ENCODE measurements at regions of chr11 and their contacts with region 1.

Region 1: GRCh38 chr11:67401495-67402191 is at the start of gene PPP1CA:
- DNase-seq: peak; percentile 95
- H3K4me3 Mint-ChIP-seq: peak within 1 kb of the TSS; percentile 87
- H3K27ac Mint-ChIP-seq: peak within 1 kb of the TSS; percentile 93
- H3K4me1 Mint-ChIP-seq: peaks cover 64% of the 10 kb centered on the region
- H3K27me3 Mint-ChIP-seq: no peaks in the 10 kb centered on the region
- total RNA-seq, gene PPP1CA: 261 to 267 TPM

Region 2: DNA sequence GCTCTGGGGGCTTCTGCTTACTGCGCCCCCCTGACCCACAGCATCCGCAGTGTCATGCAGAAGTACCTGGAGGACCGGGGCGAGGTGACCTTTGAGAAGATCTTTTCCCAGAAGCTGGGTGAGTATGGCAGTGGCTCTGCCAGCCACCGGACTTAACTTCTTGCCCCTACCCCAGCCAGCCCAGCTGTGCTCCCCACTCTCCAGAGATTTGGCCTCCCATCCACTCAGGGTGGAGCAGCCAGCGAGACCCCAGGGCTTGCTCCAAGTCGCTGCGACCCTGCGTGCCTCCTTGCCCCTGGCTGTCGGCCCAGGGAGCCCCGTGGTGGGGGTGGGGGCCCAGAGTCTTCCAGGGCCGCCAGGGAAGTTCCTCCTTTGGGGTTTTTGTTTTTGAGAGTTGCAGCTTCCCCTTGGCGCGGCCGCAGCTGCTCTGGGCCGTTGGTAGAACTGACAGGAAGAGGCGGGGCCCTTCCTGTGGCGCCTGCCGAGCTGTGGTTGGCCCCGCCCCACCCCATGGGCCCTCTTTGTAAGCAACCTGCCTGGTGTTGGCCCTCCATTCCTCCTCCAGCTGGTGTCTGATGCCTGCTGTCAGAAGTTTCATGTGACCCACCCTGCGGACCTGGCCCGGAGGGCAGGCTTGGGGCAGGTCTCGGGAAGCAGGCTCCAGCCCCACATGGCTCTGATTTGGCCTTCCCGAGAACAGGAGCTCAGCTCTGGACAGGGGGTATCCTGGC is 124.2 kb before region 1 on chr11:
- CTCF ChIA-PET with region 1: no interaction called
- POLR2A ChIA-PET with region 1: no interaction called
- intact Hi-C with region 1: loop called (anchors 5 kb)
- DNase-seq: peak; percentile 94
- H3K4me3 Mint-ChIP-seq: peak overlapping the region; percentile 69
- H3K27ac Mint-ChIP-seq: peak overlapping the region; percentile 97
- H3K4me1 Mint-ChIP-seq: peaks cover 70% of the 10 kb centered on the region
- H3K27me3 Mint-ChIP-seq: no peaks in the 10 kb centered on the region

Region 3: GRCh38 chr11:67301951-67302516 is 99.6 kb before region 1 on chr11:
- CTCF ChIA-PET with region 1: no interaction called
- POLR2A ChIA-PET with region 1: no interaction called
- intact Hi-C with region 1: no loop called
- DNase-seq: peak; percentile 9
- H3K4me3 Mint-ChIP-seq: peak overlapping the region; percentile 39
- H3K27ac Mint-ChIP-seq: no peak overlapping the region
- H3K4me1 Mint-ChIP-seq: peaks cover 14% of the 10 kb centered on the region
- H3K27me3 Mint-ChIP-seq: no peaks in the 10 kb centered on the region

Region 4: GRCh38 chr11:67420646-67421420 is 19.2 kb after region 1 on chr11:
- CTCF ChIA-PET with region 1: interaction called, 8 read pairs
- POLR2A ChIA-PET with region 1: interaction called, 21 read pairs
- intact Hi-C with region 1: loop called (anchors 2 kb)
- DNase-seq: peak; percentile 98
- H3K4me3 Mint-ChIP-seq: peak overlapping the region; percentile 74
- H3K27ac Mint-ChIP-seq: peak overlapping the region; percentile 69
- H3K4me1 Mint-ChIP-seq: peaks cover 41% of the 10 kb centered on the region
- H3K27me3 Mint-ChIP-seq: no peaks in the 10 kb centered on the region

Region 5: GRCh38 chr11:67439321-67439883 is 37.8 kb after region 1 on chr11:
- CTCF ChIA-PET with region 1: interaction called, 46 read pairs
- POLR2A ChIA-PET with region 1: interaction called, 68 read pairs
- intact Hi-C with region 1: loop called (anchors 2 kb)
- DNase-seq: peak; percentile 72
- H3K4me3 Mint-ChIP-seq: peak overlapping the region; percentile 85
- H3K27ac Mint-ChIP-seq: peak overlapping the region; percentile 95
- H3K4me1 Mint-ChIP-seq: peaks cover 51% of the 10 kb centered on the region
- H3K27me3 Mint-ChIP-seq: no peaks in the 10 kb centered on the region

Region 6: GRCh38 chr11:67482825-67483798 is 81.5 kb after region 1 on chr11 and contains the start of gene AIP:
- CTCF ChIA-PET with region 1: interaction called, 9 read pairs
- POLR2A ChIA-PET with region 1: interaction called, 17 read pairs
- intact Hi-C with region 1: loop called (anchors 1 kb)
- DNase-seq: peak; percentile 99
- H3K4me3 Mint-ChIP-seq: peak within 1 kb of the TSS; percentile 90
- H3K27ac Mint-ChIP-seq: peak within 1 kb of the TSS; percentile 99
- H3K4me1 Mint-ChIP-seq: peaks cover 42% of the 10 kb centered on the region
- H3K27me3 Mint-ChIP-seq: no peaks in the 10 kb centered on the region
- total RNA-seq, gene AIP: 160 to 169 TPM

Region 7: DNA sequence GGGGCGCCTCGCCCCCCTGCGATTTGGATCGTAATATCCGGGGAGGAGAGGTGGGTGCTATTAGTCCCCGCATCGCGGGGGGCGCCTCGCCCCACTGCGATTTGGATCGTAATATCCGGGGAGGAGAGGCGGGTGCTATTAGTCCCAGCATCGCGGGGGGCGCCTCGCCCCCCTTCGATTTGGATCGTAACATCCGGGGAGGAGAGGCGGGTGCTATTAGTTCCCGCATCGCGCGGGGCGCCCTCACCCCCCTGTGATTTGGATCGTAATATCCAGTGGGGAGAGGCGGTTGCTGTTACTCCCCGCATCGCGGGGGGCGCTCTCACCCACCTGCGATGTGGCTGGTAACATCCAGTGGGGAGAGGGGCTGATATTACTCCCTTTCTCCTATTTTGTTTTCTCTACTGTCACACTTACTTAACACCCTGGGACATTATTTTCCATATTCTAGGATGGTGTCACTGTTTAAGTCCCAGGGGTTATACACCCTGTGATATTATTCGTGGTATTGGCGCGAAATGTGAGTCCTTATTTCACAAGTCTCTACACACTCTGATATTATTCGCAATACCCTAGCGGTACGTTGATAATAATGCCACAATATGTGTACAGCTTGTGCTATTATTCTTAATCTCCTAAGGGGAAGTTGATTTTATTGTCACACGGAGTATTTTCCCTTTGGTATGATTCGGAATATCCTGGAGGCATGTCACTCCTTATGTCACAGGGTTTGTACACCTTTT is 330.6 kb after region 1 on chr11:
- CTCF ChIA-PET with region 1: no interaction called
- POLR2A ChIA-PET with region 1: no interaction called
- intact Hi-C with region 1: no loop called
- DNase-seq: peak; percentile 52
- H3K4me3 Mint-ChIP-seq: peak overlapping the region; percentile 29
- H3K27ac Mint-ChIP-seq: no peak overlapping the region
- H3K4me1 Mint-ChIP-seq: peaks cover 7% of the 10 kb centered on the region
- H3K27me3 Mint-ChIP-seq: peaks cover 18% of the 10 kb centered on the region